ENCODE measurements at regions of chr16 and their contacts with region 1.

Region 1: GRCh38 chr16:12095275-12096156 is 119.0 kb downstream of the SNX29 start:
- DNase-seq: peak; percentile 73
- ATAC-seq: peak; percentile 47
- H3K4me3 Mint-ChIP-seq: no peak overlapping the region
- H3K27ac Mint-ChIP-seq: no peak overlapping the region
- H3K4me1 Mint-ChIP-seq: peaks cover 11% of the 10 kb centered on the region
- H3K27me3 Mint-ChIP-seq: no peaks in the 10 kb centered on the region

Region 2: GRCh38 chr16:12067714-12068401 is 27.7 kb before region 1 on chr16:
- CTCF ChIA-PET with region 1: interaction called, 22 read pairs
- POLR2A ChIA-PET with region 1: no interaction called
- DNase-seq: peak; percentile 65
- ATAC-seq: peak; percentile 64
- H3K4me3 Mint-ChIP-seq: no peak overlapping the region
- H3K27ac Mint-ChIP-seq: no peak overlapping the region
- H3K4me1 Mint-ChIP-seq: no peaks in the 10 kb centered on the region
- H3K27me3 Mint-ChIP-seq: no peaks in the 10 kb centered on the region

Region 3: GRCh38 chr16:12079412-12079965 is 16.0 kb before region 1 on chr16:
- CTCF ChIA-PET with region 1: interaction called, 66 read pairs
- POLR2A ChIA-PET with region 1: interaction called, 7 read pairs
- DNase-seq: no peak
- ATAC-seq: peak; percentile 50
- H3K4me3 Mint-ChIP-seq: peak overlapping the region; percentile 51
- H3K27ac Mint-ChIP-seq: peak overlapping the region; percentile 87
- H3K4me1 Mint-ChIP-seq: peaks cover 78% of the 10 kb centered on the region
- H3K27me3 Mint-ChIP-seq: no peaks in the 10 kb centered on the region

Region 4: DNA sequence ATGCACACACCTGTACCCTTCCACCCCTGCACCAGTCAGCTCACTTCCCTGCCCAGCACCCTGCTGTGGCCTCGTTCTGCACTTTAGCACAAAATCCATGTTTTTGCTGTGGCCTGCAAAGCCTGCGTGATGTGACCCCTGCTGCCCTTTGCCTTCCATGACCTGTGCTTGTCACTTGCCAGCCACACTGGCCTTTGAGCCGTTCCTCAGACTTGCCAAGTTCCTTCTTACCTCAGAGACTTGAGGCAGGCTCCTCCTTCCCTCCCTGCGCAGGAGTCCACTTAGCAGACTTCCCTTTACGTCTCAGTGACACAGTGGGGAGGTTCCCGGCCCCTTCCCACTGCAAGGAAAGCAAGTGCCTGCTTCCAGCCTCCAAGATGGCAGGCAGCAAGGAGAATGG is 15.7 kb after region 1 on chr16:
- CTCF ChIA-PET with region 1: interaction called, 12 read pairs
- POLR2A ChIA-PET with region 1: no interaction called
- DNase-seq: no peak
- ATAC-seq: no peak
- H3K4me3 Mint-ChIP-seq: no peak overlapping the region
- H3K27ac Mint-ChIP-seq: no peak overlapping the region
- H3K4me1 Mint-ChIP-seq: no peaks in the 10 kb centered on the region
- H3K27me3 Mint-ChIP-seq: no peaks in the 10 kb centered on the region

Region 5: GRCh38 chr16:12132290-12132689 is 36.8 kb after region 1 on chr16:
- CTCF ChIA-PET with region 1: interaction called, 18 read pairs
- POLR2A ChIA-PET with region 1: no interaction called
- DNase-seq: no peak
- ATAC-seq: no peak
- H3K4me3 Mint-ChIP-seq: no peak overlapping the region
- H3K27ac Mint-ChIP-seq: no peak overlapping the region
- H3K4me1 Mint-ChIP-seq: no peaks in the 10 kb centered on the region
- H3K27me3 Mint-ChIP-seq: no peaks in the 10 kb centered on the region

Region 6: DNA sequence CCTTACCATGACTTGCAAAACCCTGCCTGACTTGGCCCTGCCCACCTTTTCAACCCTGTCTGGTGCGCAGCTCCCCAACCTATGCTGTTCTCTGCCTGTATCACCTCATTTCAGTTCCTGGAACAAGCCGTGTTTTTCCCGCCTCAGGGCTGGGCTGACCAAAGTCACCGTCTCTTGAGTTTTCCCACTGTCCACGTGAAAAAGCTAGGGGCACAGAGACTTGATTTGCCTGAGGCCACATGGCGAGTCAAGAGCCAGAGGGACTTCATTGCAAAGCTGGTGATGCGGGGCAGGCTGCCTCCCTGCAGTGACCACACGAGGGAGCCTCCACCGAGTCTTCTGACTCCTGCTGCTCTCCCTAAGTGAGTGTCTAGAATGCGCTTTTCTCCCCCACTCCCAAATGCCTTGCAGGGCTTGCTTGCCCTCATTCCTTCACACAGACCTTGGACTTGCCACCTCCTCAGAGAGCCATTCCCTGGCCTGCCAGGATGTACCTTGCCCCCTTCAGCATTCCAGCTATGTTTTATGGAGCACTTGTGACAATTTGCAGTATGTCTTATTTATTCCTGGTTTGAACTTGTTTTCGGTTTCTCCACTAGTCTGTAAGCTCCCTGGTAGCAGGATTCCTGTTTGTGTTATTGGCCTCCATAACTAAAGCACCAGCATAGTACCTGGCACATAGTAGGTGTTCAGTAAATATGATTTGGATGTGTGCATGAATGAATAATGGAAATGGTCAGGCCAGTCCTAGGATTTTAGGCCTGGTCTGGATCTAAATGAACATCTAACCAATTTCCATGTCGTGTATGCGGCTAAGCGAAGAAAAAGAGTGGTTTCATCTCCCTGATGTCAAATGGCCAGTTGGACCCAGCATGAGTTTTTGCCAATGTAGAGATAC is 133.3 kb after region 1 on chr16:
- CTCF ChIA-PET with region 1: interaction called, 11 read pairs
- POLR2A ChIA-PET with region 1: no interaction called
- DNase-seq: peak; percentile 27
- ATAC-seq: no peak
- H3K4me3 Mint-ChIP-seq: no peak overlapping the region
- H3K27ac Mint-ChIP-seq: no peak overlapping the region
- H3K4me1 Mint-ChIP-seq: no peaks in the 10 kb centered on the region
- H3K27me3 Mint-ChIP-seq: no peaks in the 10 kb centered on the region

Region 7: GRCh38 chr16:12303653-12304052 is 208.1 kb after region 1 on chr16:
- CTCF ChIA-PET with region 1: no interaction called
- POLR2A ChIA-PET with region 1: no interaction called
- DNase-seq: no peak
- ATAC-seq: no peak
- H3K4me3 Mint-ChIP-seq: no peak overlapping the region
- H3K27ac Mint-ChIP-seq: no peak overlapping the region
- H3K4me1 Mint-ChIP-seq: no peaks in the 10 kb centered on the region
- H3K27me3 Mint-ChIP-seq: no peaks in the 10 kb centered on the region

Region 8: DNA sequence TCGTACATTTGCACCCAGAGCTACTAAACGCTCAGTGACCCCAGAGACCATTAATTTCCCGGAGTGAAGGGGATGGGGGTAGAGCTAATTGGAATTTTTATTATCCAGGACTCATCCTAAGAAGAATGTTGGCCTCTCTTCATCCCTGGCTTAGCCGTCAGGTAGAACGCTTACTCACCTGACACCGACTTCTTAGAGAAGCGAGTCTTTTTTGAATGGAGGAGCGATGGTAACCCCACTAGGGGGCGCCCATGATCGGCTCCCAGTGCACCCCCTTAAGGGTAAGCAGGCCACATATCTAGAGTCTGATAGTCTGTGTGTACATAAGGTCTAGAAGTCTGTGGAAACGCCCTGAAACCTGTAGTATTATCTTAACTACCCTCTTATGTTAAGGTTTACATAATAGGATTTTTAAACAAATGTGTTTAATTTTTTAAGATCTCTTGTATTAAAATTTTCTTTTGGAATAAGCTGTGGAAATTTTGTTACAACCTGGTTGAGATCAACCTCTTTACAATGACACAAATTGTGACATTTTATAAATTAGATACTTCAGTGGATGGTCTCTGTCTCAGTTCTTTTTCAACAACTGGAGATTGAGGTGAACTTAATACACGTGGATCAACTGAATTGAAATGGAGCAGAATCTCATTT is 478.3 kb after region 1 on chr16:
- CTCF ChIA-PET with region 1: interaction called, 15 read pairs
- POLR2A ChIA-PET with region 1: no interaction called
- DNase-seq: peak; percentile 76
- ATAC-seq: peak; percentile 71
- H3K4me3 Mint-ChIP-seq: no peak overlapping the region
- H3K27ac Mint-ChIP-seq: no peak overlapping the region
- H3K4me1 Mint-ChIP-seq: peaks cover 9% of the 10 kb centered on the region
- H3K27me3 Mint-ChIP-seq: no peaks in the 10 kb centered on the region

Measured in activated CD8-positive, alpha-beta T cell treated with anti-CD3 and anti-CD28 coated beads, Interleukin-2, amount 10 ng/mL, durations not matched to agents 7 days and 5 days (primary cell).